Natural killer cell (primary cell): ENCODE measurements at regions of chr1 and their contacts with region 1.

Region 1: DNA sequence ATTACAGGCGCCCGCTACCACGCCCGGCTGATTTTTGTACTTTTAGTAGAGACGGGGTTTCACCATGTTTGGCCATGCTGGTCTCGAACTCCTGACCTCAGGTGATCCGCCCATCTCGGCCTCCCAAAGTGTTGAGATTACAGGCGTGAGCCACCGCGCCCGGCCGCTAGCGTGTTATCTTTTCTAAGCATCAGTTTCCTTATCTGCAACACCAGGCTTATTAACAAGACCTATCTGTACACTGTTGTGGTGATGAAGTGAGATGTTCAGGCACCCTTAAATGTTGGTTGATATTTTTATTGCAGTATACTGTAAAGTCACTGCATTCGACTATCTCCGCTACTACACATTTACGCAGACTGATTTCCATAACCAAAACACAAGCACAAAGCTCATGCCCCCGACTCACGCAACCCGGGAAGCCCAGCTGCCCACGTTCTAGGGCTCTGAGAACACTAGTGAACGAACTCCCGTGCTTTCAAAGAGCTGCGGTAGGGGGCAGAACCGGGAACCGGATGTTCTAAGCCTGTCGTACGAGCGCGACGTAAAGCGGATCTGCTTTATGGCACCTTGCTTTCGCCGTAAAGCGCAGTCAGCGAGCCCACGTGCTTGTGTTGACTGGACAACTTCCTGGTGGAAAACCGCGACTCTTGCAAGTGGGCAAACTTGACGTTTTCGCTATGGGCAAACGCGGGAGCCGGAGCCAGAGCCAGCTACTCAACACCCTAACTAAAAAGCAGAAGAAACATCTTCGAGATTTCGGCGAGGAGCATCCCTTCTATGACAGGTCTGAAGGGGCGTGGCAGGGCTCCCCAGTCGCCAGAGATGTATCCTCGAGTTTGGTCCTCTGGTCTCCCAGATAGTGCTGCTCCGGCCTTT is at the start of gene UTP25:
- DNase-seq: peak; percentile 91 to 98
- ATAC-seq: peak; percentile 88 to 97 (median 91)
- H3K4me3 ChIP-seq: peak within 1 kb of the TSS; percentile 81
- H3K4me3 Mint-ChIP-seq: peak within 1 kb of the TSS; percentile 92
- H3K27ac ChIP-seq: peak within 1 kb of the TSS; percentile 69
- H3K27ac Mint-ChIP-seq: peak within 1 kb of the TSS; percentile 88 to 93
- H3K4me1 ChIP-seq: peaks cover 19% of the 10 kb centered on the region
- H3K4me1 Mint-ChIP-seq: peaks cover 24 to 37% of the 10 kb centered on the region in 2 donors
- H3K27me3 ChIP-seq: peaks cover 5% of the 10 kb centered on the region
- H3K27me3 Mint-ChIP-seq: peaks cover 5 to 7% of the 10 kb centered on the region in 2 donors
- CTCF ChIP-seq: peak; percentile 63
- total RNA-seq, gene UTP25: 6.0 to 8.9 (median 8.3) TPM

Region 2: GRCh38 chr1:208997726-208998312 is 829.8 kb before region 1 on chr1:
- intact Hi-C with region 1: no loop called
- DNase-seq: no peak
- ATAC-seq: no peak
- H3K4me3 ChIP-seq: no peak overlapping the region
- H3K4me3 Mint-ChIP-seq: no peak overlapping the region
- H3K27ac ChIP-seq: no peak overlapping the region
- H3K27ac Mint-ChIP-seq: no peak overlapping the region
- H3K4me1 ChIP-seq: no peaks in the 10 kb centered on the region
- H3K4me1 Mint-ChIP-seq: no peaks in the 10 kb centered on the region
- H3K27me3 ChIP-seq: no peaks in the 10 kb centered on the region
- H3K27me3 Mint-ChIP-seq: peaks cover 4 to 5% of the 10 kb centered on the region in 2 donors
- CTCF ChIP-seq: no peak

Region 3: DNA sequence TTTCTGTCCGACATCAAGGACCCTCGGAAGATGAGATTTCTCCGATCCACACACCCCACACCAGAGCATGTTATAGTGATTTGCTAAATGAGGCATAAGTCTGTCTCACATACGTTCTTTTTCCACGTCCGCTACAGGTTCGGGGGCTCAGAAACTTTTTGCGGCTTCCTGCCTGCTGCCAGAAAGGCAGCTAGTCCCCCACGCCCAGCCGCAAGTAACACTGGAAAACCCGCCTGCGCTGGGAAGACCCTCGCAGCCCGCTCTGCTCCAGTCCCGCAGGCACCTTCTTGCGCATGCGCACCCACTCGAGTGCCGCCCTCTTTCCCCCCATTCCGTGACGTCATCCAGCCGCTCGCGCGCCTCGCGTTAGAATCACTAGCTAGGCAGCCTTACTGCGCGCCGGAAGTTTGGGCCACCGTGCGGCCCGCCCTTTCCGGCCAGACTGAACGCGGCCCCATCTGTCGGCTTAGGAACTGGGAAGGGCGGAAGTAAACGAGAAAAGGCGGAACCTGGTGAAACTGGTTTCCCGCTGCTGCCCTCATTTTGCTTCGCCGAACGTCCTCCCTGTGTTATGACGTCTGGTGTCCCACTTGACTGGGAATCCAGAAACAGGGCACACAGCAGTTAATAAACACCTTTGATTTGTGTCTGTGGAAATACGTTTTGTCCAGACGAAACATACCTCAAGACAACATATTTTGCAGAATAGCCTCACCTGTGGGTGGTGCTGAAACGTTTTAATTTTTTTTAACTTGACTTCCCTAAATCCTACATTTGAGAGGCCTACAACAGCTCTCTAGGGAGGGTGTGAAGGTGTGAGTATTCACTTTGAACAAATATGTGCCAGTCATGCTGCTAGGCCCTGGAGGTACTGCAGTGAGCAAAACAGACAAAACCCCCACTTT is 43.1 kb before region 1 on chr1 and contains the start of gene C1orf74:
- intact Hi-C with region 1: loop called (anchors 1 kb)
- DNase-seq: peak; percentile 100
- ATAC-seq: peak; percentile 98 to 100 (median 99)
- H3K4me3 ChIP-seq: peak within 1 kb of the TSS; percentile 66
- H3K4me3 Mint-ChIP-seq: peak within 1 kb of the TSS; percentile 95
- H3K27ac ChIP-seq: peak within 1 kb of the TSS; percentile 94
- H3K27ac Mint-ChIP-seq: peak within 1 kb of the TSS; percentile 95 to 98
- H3K4me1 ChIP-seq: peaks cover 19% of the 10 kb centered on the region
- H3K4me1 Mint-ChIP-seq: peaks cover 31 to 36% of the 10 kb centered on the region in 2 donors
- H3K27me3 ChIP-seq: no peaks in the 10 kb centered on the region
- H3K27me3 Mint-ChIP-seq: peaks cover 0 to 3% of the 10 kb centered on the region in 2 donors
- CTCF ChIP-seq: no peak
- total RNA-seq, gene C1orf74: 0.75 to 0.88 (median 0.80) TPM